ENCODE measurements at regions of chr11 and their contacts with region 1.

Region 1: GRCh38 chr11:64864473-64865285 is 13.7 kb downstream of the EHD1 start:
- DNase-seq: no peak
- H3K4me3 ChIP-seq: peak overlapping the region; percentile 66
- H3K4me3 Mint-ChIP-seq: peak overlapping the region; percentile 76 to 91 (median 78)
- H3K27ac ChIP-seq: peak overlapping the region; percentile 75
- H3K27ac Mint-ChIP-seq: peak overlapping the region; percentile 80 to 99 (median 96)
- H3K4me1 ChIP-seq: peaks cover 100% of the 10 kb centered on the region
- H3K4me1 Mint-ChIP-seq: peaks cover 84 to 95% (median 91%) of the 10 kb centered on the region in 3 donors
- H3K27me3 ChIP-seq: no peaks in the 10 kb centered on the region
- H3K27me3 Mint-ChIP-seq: peaks cover 0 to 1% of the 10 kb centered on the region in 2 donors

Region 2: GRCh38 chr11:64723117-64723906 is 141.4 kb before region 1 on chr11 and contains the start of gene NRXN2:
- CTCF ChIA-PET with region 1: no interaction called
- POLR2A ChIA-PET with region 1: no interaction called
- DNase-seq: peak; percentile 78 to 87 (median 82)
- H3K4me3 ChIP-seq: peak within 1 kb of the TSS; percentile 67
- H3K4me3 Mint-ChIP-seq: peak within 1 kb of the TSS; percentile 68 to 85 (median 74)
- H3K27ac ChIP-seq: peak within 1 kb of the TSS; percentile 43
- H3K27ac Mint-ChIP-seq: peak within 1 kb of the TSS in 6 of 8 donors; percentile 42 to 90 (median 65)
- H3K4me1 ChIP-seq: peaks cover 6% of the 10 kb centered on the region
- H3K4me1 Mint-ChIP-seq: peaks cover 8 to 20% (median 16%) of the 10 kb centered on the region in 3 donors
- H3K27me3 ChIP-seq: peaks cover 6% of the 10 kb centered on the region
- H3K27me3 Mint-ChIP-seq: peaks cover 13 to 37% of the 10 kb centered on the region in 2 donors
- total RNA-seq, gene NRXN2: 0.55 to 0.75 TPM

Region 3: GRCh38 chr11:64887757-64888405 is 23.2 kb after region 1 on chr11:
- CTCF ChIA-PET with region 1: interaction called, 1,256 read pairs
- POLR2A ChIA-PET with region 1: interaction called, 569 read pairs
- DNase-seq: peak; percentile 78 to 89 (median 84)
- H3K4me3 ChIP-seq: peak overlapping the region; percentile 60
- H3K4me3 Mint-ChIP-seq: peak overlapping the region; percentile 35 to 87 (median 78)
- H3K27ac ChIP-seq: peak overlapping the region; percentile 75
- H3K27ac Mint-ChIP-seq: peak overlapping the region in 7 of 8 donors; percentile 26 to 95 (median 85)
- H3K4me1 ChIP-seq: peaks cover 29% of the 10 kb centered on the region
- H3K4me1 Mint-ChIP-seq: peaks cover 24 to 41% (median 24%) of the 10 kb centered on the region in 3 donors
- H3K27me3 ChIP-seq: no peaks in the 10 kb centered on the region
- H3K27me3 Mint-ChIP-seq: no peaks in the 10 kb centered on the region

Region 4: GRCh38 chr11:64924102-64924851 is 59.6 kb after region 1 on chr11 and contains the start of gene PPP2R5B:
- CTCF ChIA-PET with region 1: no interaction called
- POLR2A ChIA-PET with region 1: no interaction called
- DNase-seq: peak; percentile 86 to 93 (median 89)
- H3K4me3 ChIP-seq: peak within 1 kb of the TSS; percentile 79
- H3K4me3 Mint-ChIP-seq: peak within 1 kb of the TSS; percentile 90 to 97 (median 95)
- H3K27ac ChIP-seq: peak within 1 kb of the TSS; percentile 80
- H3K27ac Mint-ChIP-seq: peak within 1 kb of the TSS; percentile 89 to 100 (median 99)
- H3K4me1 ChIP-seq: peaks cover 21% of the 10 kb centered on the region
- H3K4me1 Mint-ChIP-seq: peaks cover 9 to 18% (median 11%) of the 10 kb centered on the region in 3 donors
- H3K27me3 ChIP-seq: no peaks in the 10 kb centered on the region
- H3K27me3 Mint-ChIP-seq: no peaks in the 10 kb centered on the region
- total RNA-seq, gene PPP2R5B: 11.2 to 11.7 TPM

Region 5: GRCh38 chr11:65290448-65291165 is 425.9 kb after region 1 on chr11:
- CTCF ChIA-PET with region 1: no interaction called
- POLR2A ChIA-PET with region 1: no interaction called
- DNase-seq: no peak
- H3K4me3 ChIP-seq: no peak overlapping the region
- H3K4me3 Mint-ChIP-seq: no peak overlapping the region
- H3K27ac ChIP-seq: no peak overlapping the region
- H3K27ac Mint-ChIP-seq: no peak overlapping the region
- H3K4me1 ChIP-seq: no peaks in the 10 kb centered on the region
- H3K4me1 Mint-ChIP-seq: no peaks in the 10 kb centered on the region
- H3K27me3 ChIP-seq: no peaks in the 10 kb centered on the region
- H3K27me3 Mint-ChIP-seq: peaks cover 0 to 1% of the 10 kb centered on the region in 2 donors

Measured in CD8-positive, alpha-beta memory T cell (primary cell).